PC-9 (cell line): ENCODE measurements at regions of chr10 and their contacts with region 1.

Region 1: DNA sequence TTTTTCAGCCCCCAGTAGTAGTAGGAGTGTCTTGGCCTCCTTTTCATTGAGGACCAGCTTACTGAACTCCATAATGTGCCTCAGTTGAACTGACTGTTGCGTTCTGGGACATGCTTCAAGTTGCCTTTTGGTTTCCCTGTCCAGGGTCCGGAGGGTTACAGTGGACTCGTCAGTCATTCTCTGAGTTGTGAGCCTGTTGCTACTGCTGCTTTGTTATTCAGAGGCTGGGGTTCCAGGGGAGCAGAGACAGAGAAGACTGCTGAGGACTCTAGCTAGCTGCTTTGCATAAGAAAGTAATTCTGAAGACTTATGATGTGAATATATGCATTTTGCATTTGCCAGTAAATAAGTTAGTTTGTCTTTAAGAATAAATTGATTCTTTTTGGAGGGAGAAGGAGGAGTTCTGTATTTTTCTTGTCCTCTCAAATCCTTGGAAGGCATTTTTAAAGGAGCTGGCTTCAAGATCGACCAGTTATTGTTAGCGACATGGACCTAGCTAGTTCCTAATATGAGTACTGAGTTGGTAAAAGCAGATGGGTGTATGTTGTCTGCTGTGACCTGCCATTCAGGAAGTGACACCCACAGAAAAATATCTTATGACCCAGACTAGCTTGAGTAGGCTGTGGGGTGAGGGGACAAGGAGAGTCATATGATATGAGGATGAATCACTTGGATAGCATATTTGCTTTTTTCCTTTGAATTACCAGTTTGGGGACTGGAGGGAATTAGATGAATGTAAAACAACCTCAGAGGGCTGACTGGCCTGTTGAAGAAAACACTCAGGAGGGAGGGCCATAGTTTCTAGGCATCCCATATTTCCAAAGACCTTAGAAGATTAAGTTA is 8.3 kb downstream of the PI4K2A start:
- DNase-seq: peak; percentile 49 to 93
- H3K4me3 ChIP-seq: peak overlapping the region; percentile 29; the same call in 1 of the 2 replicates
- H3K27ac ChIP-seq: peak overlapping the region; percentile 91
- H3K4me1 ChIP-seq: peaks cover 63% of the 10 kb centered on the region
- H3K27me3 ChIP-seq: no peaks in the 10 kb centered on the region
- CTCF ChIP-seq: no peak

Region 2: GRCh38 chr10:97412891-97413304 is 235.9 kb before region 1 on chr10:
- CTCF ChIA-PET with region 1: no interaction called
- POLR2A ChIA-PET with region 1: interaction called, 12 read pairs
- intact Hi-C with region 1: no loop called
- DNase-seq: peak; percentile 47 to 81
- H3K4me3 ChIP-seq: no peak overlapping the region
- H3K27ac ChIP-seq: peak overlapping the region; percentile 50
- H3K4me1 ChIP-seq: peaks cover 10% of the 10 kb centered on the region
- H3K27me3 ChIP-seq: no peaks in the 10 kb centered on the region
- CTCF ChIP-seq: no peak

Region 3: DNA sequence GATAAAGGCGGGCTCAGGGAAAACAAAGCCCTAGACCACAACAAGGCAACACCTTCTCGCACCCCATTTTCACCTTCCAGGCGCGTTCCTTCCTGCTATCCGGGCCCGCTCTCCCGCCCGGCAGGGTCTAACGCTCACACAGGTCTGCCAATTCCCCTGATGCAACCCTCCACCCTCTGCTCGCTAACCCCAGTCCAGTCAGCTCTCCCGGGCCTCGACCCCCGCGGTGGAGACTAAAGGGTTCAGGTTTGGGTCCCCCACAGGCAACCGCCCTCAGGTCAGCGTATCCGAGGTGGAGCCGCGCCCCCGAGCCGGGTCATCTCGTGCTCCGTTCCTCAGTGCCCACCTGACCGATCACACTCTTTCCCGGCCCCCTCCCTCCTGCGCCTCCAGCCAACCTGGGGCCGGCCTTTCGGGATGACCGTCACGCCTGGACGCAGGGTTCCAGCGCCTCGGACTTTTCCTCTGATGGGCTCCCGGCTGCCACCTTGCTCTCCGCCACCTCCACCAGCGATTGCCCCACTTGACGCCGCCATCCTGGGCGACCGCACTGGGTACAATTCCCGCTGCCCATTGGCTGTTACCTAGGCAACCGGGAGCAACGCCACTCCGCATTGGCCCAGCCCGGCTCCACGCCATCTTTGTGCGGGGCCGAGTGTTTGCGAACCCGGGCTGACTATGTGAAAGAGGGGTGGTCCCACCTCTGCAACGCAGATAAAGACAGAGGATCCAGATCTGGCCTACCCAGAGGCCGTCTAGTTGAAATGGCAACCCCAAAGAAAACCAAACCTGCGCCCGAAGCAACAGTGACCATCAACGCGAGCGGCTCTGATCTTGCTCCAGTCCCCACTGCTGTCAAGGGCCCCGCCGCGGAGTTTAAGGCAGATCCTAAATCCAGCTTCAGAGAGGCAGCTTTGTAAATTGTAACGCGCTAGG is 15.6 kb before region 1 on chr10 and contains the start of gene MORN4:
- CTCF ChIA-PET with region 1: interaction called, 12 read pairs
- POLR2A ChIA-PET with region 1: no interaction called
- intact Hi-C with region 1: no loop called
- DNase-seq: peak; percentile 72 to 84
- H3K4me3 ChIP-seq: peak within 1 kb of the TSS; percentile 83
- H3K27ac ChIP-seq: no peak within 1 kb of the TSS
- H3K4me1 ChIP-seq: no peaks in the 10 kb centered on the region
- H3K27me3 ChIP-seq: no peaks in the 10 kb centered on the region
- CTCF ChIP-seq: no peak
- total RNA-seq, gene MORN4: 10.0 and 10.6 TPM in 2 replicates